ENCODE measurements at regions of chr17 and their contacts with region 1.

Region 1: DNA sequence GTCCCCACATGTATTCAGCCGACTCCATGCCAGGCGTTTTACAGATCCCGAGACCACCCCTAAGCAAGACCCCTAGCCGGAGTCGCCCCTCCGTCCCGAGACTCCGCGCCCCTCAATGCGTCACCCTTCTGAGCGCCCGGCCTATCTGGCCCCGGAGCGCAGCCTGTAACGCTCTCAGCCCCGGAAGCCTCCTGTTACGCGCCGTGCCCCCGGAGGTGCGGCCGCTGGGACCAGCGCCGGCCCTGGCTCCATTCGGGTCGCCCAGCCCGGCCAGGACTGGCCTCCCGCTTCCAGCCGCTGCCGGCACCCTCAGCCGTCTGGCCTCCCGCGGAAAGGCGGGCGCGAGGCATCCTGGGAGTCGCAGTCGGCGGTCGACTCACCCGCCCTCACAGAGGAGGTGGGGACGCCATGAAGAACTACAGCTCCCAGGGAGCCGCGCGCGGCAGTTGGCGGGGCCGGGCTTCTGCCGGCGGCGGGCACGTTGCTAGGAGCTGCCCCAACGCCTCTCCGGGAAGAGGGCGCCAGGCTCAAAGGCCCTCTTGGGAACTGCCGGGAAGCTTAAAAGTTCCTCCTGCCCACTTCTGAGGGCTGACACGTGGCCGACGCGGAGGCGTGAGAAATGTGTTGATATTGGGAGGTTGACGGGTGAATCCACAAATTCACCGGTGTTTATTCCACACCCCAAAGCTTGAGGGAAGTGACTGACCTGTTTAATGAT is at the start of gene FBF1:
- DNase-seq: peak; percentile 89 to 94 (median 91)
- H3K4me3 ChIP-seq: peak within 1 kb of the TSS; percentile 70
- H3K27ac ChIP-seq: peak within 1 kb of the TSS in 1 of 2 donors; percentile 54
- H3K4me1 ChIP-seq: no peaks in the 10 kb centered on the region
- H3K27me3 ChIP-seq: no peaks in the 10 kb centered on the region
- CTCF ChIP-seq: peak in 1 of 3 donors; percentile 17
- EP300 ChIP-seq: no peak
- POLR2A ChIP-seq: peak; percentile 80
- total RNA-seq, gene FBF1: 5.0 to 14.9 (median 11.2) TPM

Region 2: DNA sequence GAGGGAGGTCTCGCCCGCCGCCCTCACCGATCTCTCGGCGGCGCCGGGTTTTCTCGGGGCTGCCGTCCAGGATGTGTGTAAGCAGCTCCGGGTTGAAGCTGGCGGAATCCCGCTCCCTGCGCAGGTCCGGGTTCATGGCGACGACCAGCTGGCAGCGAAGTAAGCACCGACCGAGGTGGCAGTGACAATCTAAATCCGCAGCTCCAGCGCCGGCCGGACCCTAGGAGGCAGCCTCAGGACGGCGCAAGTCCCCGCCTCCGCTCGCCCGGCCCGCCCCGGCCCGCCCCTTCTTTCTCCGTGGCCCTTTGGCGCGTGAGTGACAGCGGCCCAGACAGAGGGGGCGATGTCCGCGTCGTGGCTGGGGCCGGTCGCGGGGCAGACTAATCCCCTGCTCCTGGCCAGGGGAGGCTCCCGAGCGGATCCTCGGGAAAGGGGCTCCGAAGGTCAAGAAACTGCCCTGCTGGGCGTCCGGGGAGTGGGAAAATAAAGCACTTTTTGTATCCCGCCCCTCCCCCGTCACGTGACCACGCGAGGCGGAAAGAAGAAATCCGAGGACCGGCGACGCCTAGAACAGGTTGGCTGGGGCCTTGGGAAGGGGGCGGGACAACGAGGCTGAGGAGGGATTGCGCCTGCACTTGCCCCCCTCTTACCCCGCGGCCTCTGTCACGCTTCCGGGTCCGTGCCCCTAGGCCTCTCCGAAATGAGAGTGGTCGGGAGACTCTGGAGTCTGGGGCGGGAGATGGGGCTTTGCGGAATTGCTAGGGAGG is 38.2 kb after region 1 on chr17 and contains the starts of genes ACOX1 and TEN1:
- intact Hi-C with region 1: loop called in 1 of 4 experiments (anchors 5 kb)
- DNase-seq: peak; percentile 97 to 98 (median 98)
- H3K4me3 ChIP-seq: peak within 1 kb of the TSS; percentile 74
- H3K27ac ChIP-seq: peak within 1 kb of the TSS; percentile 93 to 98
- H3K4me1 ChIP-seq: peaks cover 1% of the 10 kb centered on the region
- H3K27me3 ChIP-seq: no peaks in the 10 kb centered on the region
- CTCF ChIP-seq: peak; percentile 26 to 69 (median 63)
- EP300 ChIP-seq: no peak
- POLR2A ChIP-seq: peak; percentile 90
- total RNA-seq, gene ACOX1: 20.1 to 53.0 (median 41.1) TPM
- total RNA-seq, gene TEN1: 7.4 to 16.3 (median 10.5) TPM